ENCODE measurements at regions of chr6 and their contacts with region 1.

Region 1: DNA sequence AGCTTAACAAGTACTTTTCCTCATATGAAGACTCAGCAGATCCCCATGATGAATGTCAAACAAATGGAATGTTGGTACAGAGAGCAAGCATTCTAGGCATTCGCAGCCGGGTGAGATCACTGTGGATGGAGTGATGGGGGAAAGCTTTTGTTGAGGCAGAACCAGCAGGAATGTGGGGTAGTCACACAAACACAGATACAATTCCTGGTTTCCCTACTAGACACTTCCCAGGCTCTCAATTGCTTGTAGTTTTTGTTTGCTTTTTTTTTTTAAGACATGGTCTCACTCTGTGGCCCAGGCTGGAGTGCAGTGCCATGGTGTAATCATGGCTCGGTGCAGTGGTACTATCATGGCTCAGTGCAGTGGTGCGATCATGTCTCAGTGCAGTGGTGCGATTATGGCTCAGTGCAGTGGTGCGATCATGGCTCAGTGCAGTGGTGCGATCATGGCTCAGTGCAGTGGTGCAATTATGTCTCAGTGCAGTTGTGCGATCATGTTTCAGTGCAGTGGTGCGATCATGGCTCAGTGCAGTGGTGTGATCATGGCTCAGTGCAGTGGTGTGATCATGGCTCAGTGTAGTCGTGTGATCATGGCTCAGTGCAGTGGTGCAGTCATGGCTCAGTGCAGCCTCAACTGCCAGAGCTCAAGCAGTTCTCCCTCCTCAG is 15.4 kb upstream of the IER3 start:
- DNase-seq: no peak
- ATAC-seq: no peak
- H3K4me3 ChIP-seq: no peak overlapping the region
- H3K4me3 Mint-ChIP-seq: no peak overlapping the region
- H3K27ac ChIP-seq: no peak overlapping the region
- H3K27ac Mint-ChIP-seq: no peak overlapping the region
- H3K4me1 ChIP-seq: peaks cover 11% of the 10 kb centered on the region
- H3K4me1 Mint-ChIP-seq: peaks cover 23% of the 10 kb centered on the region
- H3K27me3 ChIP-seq: no peaks in the 10 kb centered on the region
- H3K27me3 Mint-ChIP-seq: no peaks in the 10 kb centered on the region
- CTCF ChIP-seq: no peak

Region 2: GRCh38 chr6:30800871-30801270 is 41.2 kb after region 1 on chr6:
- CTCF ChIA-PET with region 1: no interaction called
- POLR2A ChIA-PET with region 1: no interaction called
- intact Hi-C with region 1: loop called in 1 of 2 experiments (anchors 1 kb)
- DNase-seq: no peak
- ATAC-seq: no peak
- H3K4me3 ChIP-seq: no peak overlapping the region
- H3K4me3 Mint-ChIP-seq: no peak overlapping the region
- H3K27ac ChIP-seq: no peak overlapping the region
- H3K27ac Mint-ChIP-seq: no peak overlapping the region
- H3K4me1 ChIP-seq: peaks cover 4% of the 10 kb centered on the region
- H3K4me1 Mint-ChIP-seq: peaks cover 28% of the 10 kb centered on the region
- H3K27me3 ChIP-seq: no peaks in the 10 kb centered on the region
- H3K27me3 Mint-ChIP-seq: no peaks in the 10 kb centered on the region
- CTCF ChIP-seq: no peak